ENCODE measurements at regions of chr6 and their contacts with region 1.

Region 1: DNA sequence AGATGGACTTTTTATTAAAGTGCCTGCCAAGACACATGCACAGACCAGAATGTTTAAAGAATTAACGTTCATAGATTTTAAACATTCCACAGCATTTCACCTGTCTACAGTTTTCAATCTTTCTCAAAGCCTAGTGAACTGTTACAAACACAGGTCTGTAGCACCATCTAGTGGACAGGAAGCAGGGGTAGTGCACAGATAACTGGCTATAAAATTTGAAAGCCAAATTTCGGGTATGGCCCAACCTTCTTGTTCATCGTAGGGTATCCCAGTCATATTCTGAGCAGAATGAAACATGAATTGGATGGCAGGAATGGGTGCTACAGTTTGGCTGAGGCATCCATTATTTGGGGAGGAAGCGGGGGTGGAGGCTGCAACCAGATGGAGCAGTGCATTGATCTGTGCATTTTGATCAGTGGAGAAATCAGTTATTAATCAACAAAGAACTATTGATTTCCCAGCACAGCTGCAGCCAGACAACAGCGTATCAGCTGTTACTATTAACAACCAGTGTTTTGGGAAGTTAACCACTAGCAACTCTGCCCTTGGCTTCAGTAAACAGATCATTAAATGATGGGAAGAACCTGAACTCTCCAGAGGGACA is 56.1 kb upstream of the B3GAT2 start:
- DNase-seq: peak in 1 of 2 experiments; percentile 14
- H3K4me3 ChIP-seq: no peak overlapping the region
- H3K27ac ChIP-seq: no peak overlapping the region
- H3K4me1 ChIP-seq: no peaks in the 10 kb centered on the region
- H3K27me3 ChIP-seq: no peaks in the 10 kb centered on the region
- CTCF ChIP-seq: peak; percentile 86

Region 2: GRCh38 chr6:70221025-70221714 is 791.8 kb before region 1 on chr6:
- CTCF ChIA-PET with region 1: no interaction called
- POLR2A ChIA-PET with region 1: interaction called, 4 read pairs
- intact Hi-C with region 1: loop called (anchors 2 kb)
- DNase-seq: no peak
- H3K4me3 ChIP-seq: no peak overlapping the region
- H3K27ac ChIP-seq: no peak overlapping the region
- H3K4me1 ChIP-seq: no peaks in the 10 kb centered on the region
- H3K27me3 ChIP-seq: peaks cover 4% of the 10 kb centered on the region; the same call in 1 of the 2 replicates
- CTCF ChIP-seq: peak; percentile 86

Region 3: GRCh38 chr6:70520575-70520974 is 492.4 kb before region 1 on chr6:
- CTCF ChIA-PET with region 1: no interaction called
- POLR2A ChIA-PET with region 1: no interaction called
- intact Hi-C with region 1: loop called (anchors 2 kb)
- DNase-seq: no peak
- H3K4me3 ChIP-seq: no peak overlapping the region
- H3K27ac ChIP-seq: no peak overlapping the region
- H3K4me1 ChIP-seq: no peaks in the 10 kb centered on the region
- H3K27me3 ChIP-seq: no peaks in the 10 kb centered on the region
- CTCF ChIP-seq: peak; percentile 73

Region 4: DNA sequence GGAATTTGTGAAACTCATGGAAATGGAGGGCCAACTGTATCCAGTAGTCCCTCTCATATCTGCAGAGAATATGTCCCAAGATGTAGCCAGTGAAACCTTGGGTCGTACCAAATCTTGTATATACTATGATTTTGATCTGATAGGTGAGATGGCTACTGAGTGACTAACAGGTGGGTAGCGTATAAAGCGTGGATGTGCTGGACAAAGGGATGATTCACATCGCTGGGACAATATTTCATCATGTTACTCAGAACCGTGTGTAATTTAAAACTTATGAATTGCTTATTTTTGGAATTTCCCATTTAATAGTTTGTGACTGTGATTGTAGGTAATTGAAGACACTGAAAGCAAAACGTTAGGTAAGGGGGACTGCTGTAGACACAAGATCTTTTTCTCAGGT is 201.2 kb before region 1 on chr6:
- CTCF ChIA-PET with region 1: no interaction called
- POLR2A ChIA-PET with region 1: no interaction called
- intact Hi-C with region 1: no loop called
- DNase-seq: no peak
- H3K4me3 ChIP-seq: no peak overlapping the region
- H3K27ac ChIP-seq: no peak overlapping the region
- H3K4me1 ChIP-seq: no peaks in the 10 kb centered on the region
- H3K27me3 ChIP-seq: no peaks in the 10 kb centered on the region
- CTCF ChIP-seq: no peak

Region 5: DNA sequence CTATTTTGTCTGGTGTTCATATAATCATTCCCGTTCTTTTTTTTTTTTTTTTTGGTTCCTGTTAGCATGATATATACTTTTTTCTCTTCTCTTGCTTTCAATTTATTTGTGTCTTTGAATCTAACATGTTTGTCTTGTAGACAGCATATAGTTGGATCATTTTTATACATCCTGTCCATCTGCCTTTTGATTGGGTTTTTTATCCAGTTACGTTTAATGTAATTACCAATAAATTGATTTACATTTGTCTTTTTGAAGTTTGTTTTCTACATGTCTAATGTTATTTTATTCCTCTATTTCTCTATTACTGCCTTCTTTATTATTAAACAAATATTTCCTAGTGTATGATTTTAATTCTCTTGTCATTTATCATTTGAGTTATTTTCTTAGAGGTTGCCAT is 140.5 kb before region 1 on chr6:
- CTCF ChIA-PET with region 1: no interaction called
- POLR2A ChIA-PET with region 1: no interaction called
- intact Hi-C with region 1: no loop called
- DNase-seq: no peak
- H3K4me3 ChIP-seq: no peak overlapping the region
- H3K27ac ChIP-seq: no peak overlapping the region
- H3K4me1 ChIP-seq: no peaks in the 10 kb centered on the region
- H3K27me3 ChIP-seq: no peaks in the 10 kb centered on the region
- CTCF ChIP-seq: no peak

Region 6: DNA sequence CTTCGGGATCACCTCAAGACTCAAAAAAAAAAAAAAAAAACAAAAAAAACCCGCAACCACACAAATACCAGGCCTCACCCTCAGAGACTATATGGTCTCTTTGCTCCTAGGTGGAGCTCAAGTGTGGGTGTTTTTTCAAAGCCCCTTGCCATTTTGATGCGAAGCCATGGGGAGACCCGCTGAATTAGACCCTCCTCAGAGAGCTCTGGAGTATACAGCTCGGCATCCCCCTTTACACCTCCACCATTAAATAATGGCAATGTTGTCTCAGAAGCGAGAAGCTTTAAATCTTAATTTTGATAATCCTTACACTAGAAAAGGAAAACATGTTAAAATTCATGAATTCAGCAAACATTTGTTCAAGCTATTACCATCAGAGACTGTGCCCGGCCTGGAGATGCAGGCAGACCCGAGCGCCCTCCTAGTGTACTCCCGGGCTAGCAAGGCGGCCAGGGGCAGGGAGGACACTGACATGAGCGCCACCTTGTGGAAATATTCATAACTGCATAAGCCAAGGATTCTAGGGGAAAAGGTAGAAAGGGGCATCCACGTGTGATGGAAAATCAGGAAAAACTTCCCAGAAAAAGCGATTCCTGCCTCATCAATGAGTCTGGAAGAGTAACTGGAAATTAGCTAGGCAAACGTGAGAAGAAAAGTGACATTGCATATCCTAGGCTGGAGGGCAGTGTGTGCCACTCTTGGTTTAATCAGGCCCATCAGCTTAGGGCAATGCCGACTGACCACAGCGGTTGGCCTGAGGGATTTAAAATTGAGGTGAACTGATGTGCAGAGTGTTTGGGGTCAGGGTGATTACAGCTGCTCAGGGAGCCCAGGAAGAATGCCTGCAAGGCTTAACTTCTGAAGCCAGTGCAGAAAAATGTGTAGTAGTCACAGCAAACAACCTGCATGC is 128.6 kb before region 1 on chr6:
- CTCF ChIA-PET with region 1: no interaction called
- POLR2A ChIA-PET with region 1: no interaction called
- intact Hi-C with region 1: loop called (anchors 10 kb)
- DNase-seq: peak in 1 of 2 experiments; percentile 52
- H3K4me3 ChIP-seq: no peak overlapping the region
- H3K27ac ChIP-seq: no peak overlapping the region
- H3K4me1 ChIP-seq: no peaks in the 10 kb centered on the region
- H3K27me3 ChIP-seq: no peaks in the 10 kb centered on the region; the same call in 1 of the 2 replicates
- CTCF ChIP-seq: peak; percentile 96

Region 7: GRCh38 chr6:71602385-71603007 is 589.5 kb after region 1 on chr6:
- CTCF ChIA-PET with region 1: interaction called, 19 read pairs
- POLR2A ChIA-PET with region 1: no interaction called
- intact Hi-C with region 1: no loop called
- DNase-seq: peak; percentile 11 to 80
- H3K4me3 ChIP-seq: no peak overlapping the region
- H3K27ac ChIP-seq: 0 out of 2 replicates have a peak overlapping the region, but pooled peaks have one; percentile 8
- H3K4me1 ChIP-seq: peaks cover 12% of the 10 kb centered on the region; the same call in 1 of the 2 replicates
- H3K27me3 ChIP-seq: no peaks in the 10 kb centered on the region
- CTCF ChIP-seq: no peak